Activated CD8-positive, alpha-beta T cell treated with anti-CD3 and anti-CD28 coated beads for 36 hours (primary cell): ENCODE measurements at regions of chr4 and their contacts with region 1.

Region 1: GRCh38 chr4:82346126-82346525 is 27.7 kb downstream of the HNRNPD start:
- DNase-seq: no peak
- ATAC-seq: no peak
- H3K4me3 Mint-ChIP-seq: no peak overlapping the region
- H3K27ac Mint-ChIP-seq: no peak overlapping the region
- H3K4me1 Mint-ChIP-seq: peaks cover 15% of the 10 kb centered on the region
- H3K27me3 Mint-ChIP-seq: no peaks in the 10 kb centered on the region
- CTCF ChIP-seq: no peak

Region 2: DNA sequence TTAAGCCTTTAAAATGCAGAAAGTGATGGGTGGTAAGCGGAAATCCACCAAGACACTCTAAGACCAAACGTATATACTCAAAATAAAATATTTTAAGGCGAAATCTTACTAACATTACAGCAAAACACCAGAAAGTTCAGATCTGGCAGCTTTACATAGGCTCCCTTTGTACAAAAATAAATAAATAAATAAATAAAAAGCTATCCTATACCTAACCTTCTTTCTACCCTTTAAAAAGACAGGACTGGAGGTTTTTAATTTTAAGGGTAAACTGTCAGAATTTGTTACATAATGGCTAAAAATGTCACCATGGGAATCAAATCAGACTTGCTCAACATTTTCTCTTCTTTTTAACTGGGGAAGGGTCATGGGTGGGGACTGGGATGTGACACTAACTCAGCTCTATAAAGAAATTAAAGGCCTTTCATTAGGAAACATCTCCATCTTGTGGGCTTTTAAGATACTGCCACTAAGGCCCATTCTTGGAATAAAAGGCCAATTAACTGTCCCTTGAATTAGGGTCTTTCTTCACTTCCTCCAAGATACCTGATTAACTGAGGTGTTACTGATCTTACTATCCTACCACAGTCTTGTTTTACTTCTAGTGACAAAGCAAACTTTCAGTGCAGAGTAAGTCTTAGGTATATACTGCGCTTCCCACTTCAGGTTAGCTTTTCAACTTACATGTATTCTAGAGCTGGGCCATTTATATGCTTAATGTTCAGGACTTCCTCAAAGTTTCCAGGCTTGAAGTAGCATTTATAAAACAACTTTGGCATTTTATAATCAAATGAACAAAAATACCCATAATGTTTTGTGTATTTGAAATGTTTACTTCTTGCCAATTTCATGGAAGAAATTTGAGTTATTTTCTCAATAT is 14.4 kb after region 1 on chr4:
- CTCF ChIA-PET with region 1: interaction called, 18 read pairs
- POLR2A ChIA-PET with region 1: interaction called, 6 read pairs
- intact Hi-C with region 1: no loop called
- DNase-seq: no peak
- ATAC-seq: peak; percentile 59
- H3K4me3 Mint-ChIP-seq: no peak overlapping the region
- H3K27ac Mint-ChIP-seq: peak overlapping the region; percentile 77
- H3K4me1 Mint-ChIP-seq: peaks cover 82% of the 10 kb centered on the region
- H3K27me3 Mint-ChIP-seq: no peaks in the 10 kb centered on the region
- CTCF ChIP-seq: peak; percentile 67